Activated naive CD4-positive, alpha-beta T cell treated with anti-CD3 and anti-CD28 coated beads for 36 hours (primary cell): ENCODE measurements at regions of chr2 and their contacts with region 1.

Region 1: GRCh38 chr2:54206596-54206995 is 49.4 kb downstream of the TSPYL6 start:
- DNase-seq: no peak
- H3K4me3 Mint-ChIP-seq: no peak overlapping the region
- H3K27ac Mint-ChIP-seq: no peak overlapping the region
- H3K4me1 Mint-ChIP-seq: peaks cover 3% of the 10 kb centered on the region
- H3K27me3 Mint-ChIP-seq: no peaks in the 10 kb centered on the region

Region 2: DNA sequence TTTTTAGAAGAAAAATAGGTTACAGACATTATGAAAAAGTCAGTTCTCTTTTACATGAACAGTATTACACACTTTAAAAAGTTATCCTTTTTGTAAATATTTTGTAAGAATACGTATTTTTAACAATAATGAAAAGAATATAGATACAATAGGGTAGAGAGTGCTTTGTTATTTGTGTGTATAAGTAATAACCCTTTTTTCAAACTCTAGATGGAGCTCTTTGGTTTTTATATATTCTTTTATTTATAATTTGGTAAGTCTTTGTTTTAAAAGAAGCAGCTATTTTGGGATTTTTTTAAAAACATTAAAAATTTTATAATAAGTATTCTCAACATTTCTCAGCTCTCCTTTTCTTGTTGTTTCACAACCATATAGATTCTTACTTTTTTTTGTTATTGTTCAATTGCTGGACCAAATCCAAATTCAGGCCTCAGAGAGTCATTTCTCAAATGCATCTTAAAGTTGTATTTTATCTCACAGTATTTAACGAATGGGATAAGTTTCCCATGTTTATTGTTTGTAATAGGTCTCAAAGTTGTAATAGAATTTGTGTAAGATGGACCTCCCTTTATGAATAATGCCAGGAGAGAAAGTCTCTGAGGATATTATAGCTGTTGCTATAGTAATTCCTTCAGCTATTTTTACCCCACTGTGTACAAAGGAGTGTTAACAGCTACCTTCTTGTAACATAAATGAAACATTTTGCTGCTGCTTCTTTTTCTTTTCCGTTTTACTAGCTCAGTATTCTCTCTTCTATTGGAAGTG is 44.8 kb before region 1 on chr2:
- CTCF ChIA-PET with region 1: no interaction called
- intact Hi-C with region 1: no loop called
- DNase-seq: no peak
- H3K4me3 Mint-ChIP-seq: no peak overlapping the region
- H3K27ac Mint-ChIP-seq: no peak overlapping the region
- H3K4me1 Mint-ChIP-seq: no peaks in the 10 kb centered on the region
- H3K27me3 Mint-ChIP-seq: no peaks in the 10 kb centered on the region

Region 3: DNA sequence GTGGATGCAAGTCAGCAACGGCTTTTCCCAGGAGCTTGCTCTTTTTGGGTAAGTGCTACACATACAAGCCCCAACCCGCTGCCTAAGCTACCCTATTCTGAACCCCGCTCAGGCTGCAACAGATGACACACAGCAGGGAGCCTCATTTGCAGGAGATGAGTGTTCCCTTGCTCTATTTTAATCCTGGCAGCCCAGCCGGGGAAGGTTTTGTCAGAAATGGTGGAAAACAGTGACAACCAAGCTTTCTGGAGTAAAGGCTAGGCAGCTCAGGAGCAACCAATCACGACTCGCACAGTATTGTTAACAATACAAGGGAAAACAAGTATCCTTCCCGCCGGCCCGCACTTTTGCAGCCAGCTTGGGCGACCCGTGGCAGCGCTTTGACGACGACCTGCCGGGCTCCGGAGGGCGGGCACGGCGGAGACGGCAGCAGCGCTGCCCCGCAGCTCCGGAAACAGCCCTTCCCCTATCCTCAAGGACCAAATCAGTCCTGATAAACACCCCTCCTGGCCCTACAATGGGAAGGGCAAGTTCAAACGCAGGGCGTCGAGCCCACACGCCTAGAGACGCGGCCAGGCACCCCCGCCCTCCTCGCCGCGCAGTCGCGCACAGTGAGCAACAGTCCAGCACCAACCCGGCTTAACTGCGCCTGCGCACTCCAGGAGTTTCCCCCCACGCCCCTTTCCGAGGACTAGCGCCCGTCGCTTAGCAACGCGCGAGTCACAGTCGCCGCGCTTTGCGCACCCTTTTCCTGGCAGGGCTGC is 123.7 kb after region 1 on chr2:
- CTCF ChIA-PET with region 1: no interaction called
- intact Hi-C with region 1: loop called (anchors 5 kb)
- DNase-seq: peak; percentile 93
- H3K4me3 Mint-ChIP-seq: peak overlapping the region; percentile 83
- H3K27ac Mint-ChIP-seq: no peak overlapping the region
- H3K4me1 Mint-ChIP-seq: peaks cover 17% of the 10 kb centered on the region
- H3K27me3 Mint-ChIP-seq: peaks cover 6% of the 10 kb centered on the region

Region 4: DNA sequence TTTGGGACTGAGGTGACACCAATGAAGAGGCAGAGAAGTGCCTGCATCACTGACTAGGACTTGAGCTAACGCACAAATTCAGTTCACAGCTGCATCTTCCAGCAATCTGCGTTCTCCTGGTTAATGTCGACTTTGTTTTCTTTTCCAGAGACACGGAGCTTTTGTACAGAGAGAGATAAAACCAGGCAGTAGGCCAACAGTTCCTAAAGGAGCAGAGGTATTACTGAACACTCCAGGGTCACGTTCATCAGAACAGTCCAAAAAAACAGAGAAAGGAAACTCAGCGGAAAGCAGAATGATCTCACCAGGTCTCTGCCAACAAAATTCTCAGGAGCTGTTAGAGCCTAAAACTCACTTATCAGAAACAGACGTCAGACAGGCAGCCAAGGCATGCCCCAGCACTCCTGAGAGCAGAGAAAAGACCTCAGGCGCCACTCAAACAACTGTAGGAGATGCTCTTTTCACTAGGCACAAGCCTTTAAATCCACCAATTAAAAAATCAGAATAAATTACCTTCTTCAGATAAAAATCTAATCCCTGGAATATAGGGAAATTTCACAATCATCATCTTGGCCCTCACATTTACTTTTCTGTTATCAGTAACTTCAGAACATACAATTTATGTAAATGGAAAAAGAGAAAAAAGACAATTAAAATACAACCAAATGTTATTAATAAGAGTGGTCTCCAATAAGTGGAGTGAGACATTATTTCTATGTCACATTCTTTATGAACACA is 153.6 kb after region 1 on chr2:
- CTCF ChIA-PET with region 1: interaction called, 4 read pairs
- intact Hi-C with region 1: loop called (anchors 5 kb)
- DNase-seq: no peak
- H3K4me3 Mint-ChIP-seq: no peak overlapping the region
- H3K27ac Mint-ChIP-seq: no peak overlapping the region
- H3K4me1 Mint-ChIP-seq: no peaks in the 10 kb centered on the region
- H3K27me3 Mint-ChIP-seq: peaks cover 23% of the 10 kb centered on the region

Region 5: DNA sequence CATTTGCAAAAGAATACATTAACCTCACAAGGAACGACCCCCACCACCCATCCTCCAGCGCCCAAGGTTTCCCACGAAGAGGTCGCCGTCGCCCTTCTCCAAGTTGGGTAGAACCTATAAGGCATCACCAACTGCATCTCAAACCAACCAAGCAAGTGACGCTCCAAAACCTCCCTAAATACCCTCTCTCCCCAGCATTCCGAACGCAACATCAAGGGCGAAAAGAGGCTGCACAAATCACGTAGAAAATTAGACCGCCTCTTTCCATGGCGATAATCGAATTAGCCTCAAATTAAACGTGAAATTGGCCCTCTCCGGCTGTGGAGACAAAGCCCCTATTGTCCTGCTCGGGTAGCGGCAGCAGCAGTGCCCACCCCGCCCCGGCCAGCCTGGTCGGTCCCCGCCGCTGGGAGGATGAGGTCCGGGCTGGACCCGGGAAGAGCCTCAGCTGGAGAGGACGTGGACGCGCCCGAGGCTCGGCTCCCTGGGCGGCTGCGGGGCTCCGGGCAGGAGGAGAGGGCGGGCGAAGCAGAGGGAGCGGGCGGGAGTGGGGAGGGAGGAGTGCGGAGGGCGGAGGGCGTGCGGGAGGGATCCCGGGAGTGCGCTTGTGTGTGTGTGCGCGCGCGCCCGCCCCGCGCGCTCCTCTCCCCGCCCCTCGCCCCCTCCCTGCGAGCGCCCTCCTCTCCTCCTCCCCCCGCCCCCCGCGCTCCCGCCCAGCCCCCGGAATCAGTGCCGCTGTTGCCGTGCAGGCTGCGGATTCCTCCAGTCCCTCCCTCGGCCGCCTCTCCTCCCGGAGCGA is 249.2 kb after region 1 on chr2 and contains the start of gene SPTBN1:
- CTCF ChIA-PET with region 1: no interaction called
- intact Hi-C with region 1: loop called (anchors 5 kb)
- DNase-seq: peak; percentile 34
- H3K4me3 Mint-ChIP-seq: peak within 1 kb of the TSS; percentile 77
- H3K27ac Mint-ChIP-seq: no peak within 1 kb of the TSS
- H3K4me1 Mint-ChIP-seq: peaks cover 13% of the 10 kb centered on the region
- H3K27me3 Mint-ChIP-seq: peaks cover 38% of the 10 kb centered on the region
- total RNA-seq, gene SPTBN1: 103 to 107 TPM

Region 6: DNA sequence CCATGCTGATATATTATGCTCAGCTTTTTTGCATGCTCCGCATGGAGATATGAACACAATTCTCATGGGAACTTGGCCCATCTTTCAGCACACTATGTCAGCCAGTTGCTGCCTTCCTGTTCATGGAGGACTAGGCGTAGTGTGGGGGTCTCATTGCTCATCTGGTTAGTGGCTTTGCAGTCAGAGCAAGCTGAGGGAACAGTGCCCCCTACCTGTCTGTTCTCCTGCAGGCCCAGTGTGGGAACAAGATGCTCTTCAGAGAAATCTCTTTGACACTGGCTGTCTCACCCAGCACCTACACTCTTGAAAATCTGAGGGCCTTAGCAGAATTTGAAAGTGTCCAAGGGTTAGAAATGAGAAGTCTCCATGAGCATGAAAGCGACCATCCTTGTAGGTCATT is 296.6 kb after region 1 on chr2:
- CTCF ChIA-PET with region 1: no interaction called
- intact Hi-C with region 1: loop called (anchors 1 kb)
- DNase-seq: peak; percentile 64
- H3K4me3 Mint-ChIP-seq: no peak overlapping the region
- H3K27ac Mint-ChIP-seq: no peak overlapping the region
- H3K4me1 Mint-ChIP-seq: no peaks in the 10 kb centered on the region
- H3K27me3 Mint-ChIP-seq: no peaks in the 10 kb centered on the region